T47D (cell line): ENCODE measurements at regions of chr17 and their contacts with region 1.

Region 1: GRCh38 chr17:76887802-76888201 is 19.6 kb downstream of the MGAT5B start:
- DNase-seq: peak in 1 of 2 experiments; percentile 29

Region 2: DNA sequence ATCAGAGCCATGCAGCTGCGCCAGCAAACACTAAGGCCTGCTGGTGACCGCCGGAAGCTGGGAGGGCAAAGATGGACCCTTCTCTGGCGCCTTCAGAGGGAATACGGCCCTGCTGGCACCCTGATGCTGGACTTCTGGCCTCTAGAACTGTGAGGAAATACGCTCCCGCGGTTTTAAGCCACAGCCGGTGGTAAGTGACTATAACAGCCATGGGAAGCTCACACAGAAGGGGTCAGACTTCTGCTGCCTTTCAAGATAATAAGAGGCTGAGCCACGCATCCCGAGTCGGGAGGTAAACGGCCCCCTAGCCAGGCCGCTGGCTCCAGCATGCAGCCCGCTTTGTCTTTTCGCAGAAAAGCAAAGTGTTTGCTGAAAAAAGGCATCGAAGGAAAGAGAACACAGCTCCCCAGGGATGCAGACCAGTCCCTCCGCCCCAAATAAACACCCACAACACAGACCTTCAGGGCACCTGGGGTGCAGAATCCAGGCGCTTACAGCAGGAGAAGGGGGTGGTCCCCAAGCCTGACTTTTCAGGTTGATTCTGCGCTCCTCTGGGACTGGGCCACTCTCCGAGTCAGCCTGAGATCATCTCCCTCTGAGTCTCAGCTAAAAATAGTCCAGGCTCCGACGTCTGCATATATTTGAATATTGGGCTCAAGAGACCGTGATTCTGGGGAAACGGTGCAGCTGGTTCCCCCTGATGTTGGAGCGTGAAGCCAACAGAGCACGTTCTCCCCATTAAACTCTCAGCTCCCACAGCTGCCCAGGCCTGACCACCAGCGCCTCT is 70.1 kb after region 1 on chr17:
- in situ Hi-C with region 1: no loop called
- DNase-seq: no peak

Region 3: GRCh38 chr17:76997981-76998531 is 110.3 kb after region 1 on chr17:
- in situ Hi-C with region 1: loop called (anchors 25 kb)
- DNase-seq: no peak